Mammary epithelial cell (primary cell): ENCODE measurements at regions of chr21 and their contacts with region 1.

Region 1: GRCh38 chr21:45950734-45951515 is 30.6 kb upstream of the COL6A1 start:
- DNase-seq: peak; percentile 58
- H3K4me3 ChIP-seq: no peak overlapping the region
- H3K27ac ChIP-seq: peak overlapping the region; percentile 6
- H3K4me1 ChIP-seq: peaks cover 18% of the 10 kb centered on the region
- H3K27me3 ChIP-seq: no peaks in the 10 kb centered on the region
- CTCF ChIP-seq: no peak

Region 2: GRCh38 chr21:45880097-45881068 is 70.5 kb before region 1 on chr21:
- CTCF ChIA-PET with region 1: no interaction called
- dilution Hi-C with region 1: loop called (anchors 5 kb)
- in situ Hi-C with region 1: no loop called
- intact Hi-C with region 1: no loop called
- DNase-seq: peak; percentile 67
- H3K4me3 ChIP-seq: peak overlapping the region in 2 of 3 experiments; percentile 7 to 12
- H3K27ac ChIP-seq: peak overlapping the region; percentile 33
- H3K4me1 ChIP-seq: peaks cover 16% of the 10 kb centered on the region
- H3K27me3 ChIP-seq: no peaks in the 10 kb centered on the region
- CTCF ChIP-seq: peak; percentile 82 to 89

Region 3: GRCh38 chr21:46022551-46023525 is 71.9 kb after region 1 on chr21:
- CTCF ChIA-PET with region 1: no interaction called
- dilution Hi-C with region 1: loop called (anchors 5 kb)
- in situ Hi-C with region 1: no loop called
- intact Hi-C with region 1: no loop called
- DNase-seq: no peak
- H3K4me3 ChIP-seq: no peak overlapping the region
- H3K27ac ChIP-seq: no peak overlapping the region
- H3K4me1 ChIP-seq: no peaks in the 10 kb centered on the region
- H3K27me3 ChIP-seq: no peaks in the 10 kb centered on the region
- CTCF ChIP-seq: no peak

Region 4: GRCh38 chr21:46052703-46053651 is 102.1 kb after region 1 on chr21:
- CTCF ChIA-PET with region 1: no interaction called
- dilution Hi-C with region 1: loop called (anchors 5 kb)
- in situ Hi-C with region 1: no loop called
- intact Hi-C with region 1: no loop called
- DNase-seq: peak; percentile 76
- H3K4me3 ChIP-seq: no peak overlapping the region
- H3K27ac ChIP-seq: no peak overlapping the region
- H3K4me1 ChIP-seq: peaks cover 41% of the 10 kb centered on the region
- H3K27me3 ChIP-seq: no peaks in the 10 kb centered on the region
- CTCF ChIP-seq: no peak

Region 5: DNA sequence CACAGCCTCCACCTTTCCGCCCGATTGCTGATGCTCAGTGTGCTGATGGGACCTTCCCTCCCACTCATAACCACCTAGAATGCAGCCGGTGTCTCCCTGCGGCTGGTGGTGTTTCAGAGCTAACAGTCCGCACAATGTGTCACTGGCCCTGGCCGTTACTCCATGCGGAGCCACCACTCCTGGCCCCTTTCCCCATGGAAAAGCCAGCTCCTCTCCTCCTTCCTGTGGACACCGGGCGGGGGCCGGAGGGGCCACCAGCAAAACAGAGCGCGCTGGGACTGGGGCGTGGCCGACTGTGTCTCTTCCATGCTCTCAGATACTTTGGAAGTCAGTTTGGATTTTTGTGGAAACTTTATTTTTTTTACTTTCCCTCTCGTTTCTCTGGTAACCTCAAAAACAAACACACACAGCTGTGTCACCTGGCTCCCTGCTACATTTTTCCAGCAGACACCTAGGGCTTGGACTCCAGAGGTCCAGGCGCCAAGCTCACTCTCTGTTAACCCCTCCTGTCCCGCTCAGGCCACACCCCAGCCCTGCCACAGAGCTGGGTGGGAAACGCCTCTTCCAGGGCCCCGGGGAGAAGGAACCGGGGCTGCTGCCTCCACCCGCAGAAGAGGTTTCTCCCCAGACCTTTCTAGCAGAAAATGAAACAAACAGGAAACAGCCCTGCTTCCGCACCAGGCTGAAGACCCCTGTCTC is 114.4 kb after region 1 on chr21:
- CTCF ChIA-PET with region 1: no interaction called
- dilution Hi-C with region 1: no loop called
- in situ Hi-C with region 1: no loop called
- intact Hi-C with region 1: no loop called
- DNase-seq: no peak
- H3K4me3 ChIP-seq: no peak overlapping the region
- H3K27ac ChIP-seq: no peak overlapping the region
- H3K4me1 ChIP-seq: no peaks in the 10 kb centered on the region
- H3K27me3 ChIP-seq: no peaks in the 10 kb centered on the region
- CTCF ChIP-seq: no peak